RWPE1 (cell line): ENCODE measurements at regions of chr19 and their contacts with region 1.

Region 1: GRCh38 chr19:4267101-4267900 is 11.8 kb upstream of the SHD start:
- DNase-seq: peak; percentile 65
- H3K27ac ChIP-seq: no peak overlapping the region
- CTCF ChIP-seq: peak; percentile 89

Region 2: GRCh38 chr19:4256563-4256962 is 10.7 kb before region 1 on chr19:
- CTCF ChIA-PET with region 1: interaction called, 10 read pairs
- POLR2A ChIA-PET with region 1: no interaction called
- DNase-seq: no peak
- H3K27ac ChIP-seq: no peak overlapping the region
- CTCF ChIP-seq: no peak

Region 3: GRCh38 chr19:4295972-4296771 is 28.9 kb after region 1 on chr19:
- CTCF ChIA-PET with region 1: no interaction called
- POLR2A ChIA-PET with region 1: no interaction called
- DNase-seq: no peak
- H3K27ac ChIP-seq: no peak overlapping the region
- CTCF ChIP-seq: no peak

Region 4: DNA sequence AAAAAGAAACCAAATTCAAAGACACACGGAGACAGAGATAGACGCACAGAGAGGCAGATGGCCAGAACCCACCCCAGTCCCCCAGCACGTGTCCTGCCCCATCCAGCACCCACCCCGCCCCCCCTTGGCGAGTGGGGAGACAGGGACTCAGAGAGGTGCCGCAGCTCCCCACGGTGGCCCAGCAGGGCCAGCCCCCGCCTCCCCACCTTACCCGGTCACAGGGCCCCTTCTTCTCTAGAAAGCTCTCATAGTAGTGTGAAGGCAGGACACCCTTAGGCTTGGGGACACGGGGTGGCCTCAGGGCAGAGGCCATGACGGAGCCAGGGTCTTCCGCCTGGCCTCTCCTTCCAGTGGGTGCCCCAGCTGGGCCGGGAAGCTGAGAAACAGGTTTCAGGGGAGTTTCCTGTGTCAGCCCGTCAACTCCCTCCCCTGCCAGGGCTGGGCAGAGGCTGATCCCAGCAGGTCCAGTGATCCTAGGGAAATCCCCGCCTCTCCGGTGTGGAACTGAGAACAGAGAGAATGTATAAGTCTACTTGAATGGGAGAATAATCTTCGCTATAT is 71.2 kb after region 1 on chr19 and contains the start of gene STAP2:
- CTCF ChIA-PET with region 1: interaction called, 12 read pairs
- POLR2A ChIA-PET with region 1: no interaction called
- DNase-seq: peak; percentile 78
- H3K27ac ChIP-seq: peak within 1 kb of the TSS; percentile 82
- CTCF ChIP-seq: no peak

Region 5: DNA sequence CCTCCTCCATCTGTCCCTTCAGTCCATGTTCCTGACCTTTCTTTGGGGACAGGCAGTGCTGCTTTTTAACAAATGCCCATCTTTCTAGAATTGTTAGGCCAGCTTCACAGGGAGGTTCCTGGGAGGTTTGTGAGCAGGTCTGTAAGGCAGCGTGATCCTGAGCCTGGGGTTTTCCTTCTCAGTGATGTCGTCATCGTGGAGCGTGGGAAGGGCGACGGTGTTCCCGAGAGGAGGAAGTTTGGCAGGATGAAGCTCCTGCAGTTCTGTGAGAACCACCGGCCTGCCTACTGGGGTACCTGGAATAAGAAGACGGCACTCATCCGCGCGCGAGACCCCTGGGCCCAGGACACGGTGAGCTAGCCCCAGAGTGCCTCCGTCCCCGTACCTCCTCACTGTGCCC is 162.0 kb after region 1 on chr19:
- CTCF ChIA-PET with region 1: no interaction called
- POLR2A ChIA-PET with region 1: interaction called, 10 read pairs
- DNase-seq: no peak
- H3K27ac ChIP-seq: peak overlapping the region; percentile 20
- CTCF ChIP-seq: no peak